ENCODE measurements at regions of chrX and their contacts with region 1.

Region 1: DNA sequence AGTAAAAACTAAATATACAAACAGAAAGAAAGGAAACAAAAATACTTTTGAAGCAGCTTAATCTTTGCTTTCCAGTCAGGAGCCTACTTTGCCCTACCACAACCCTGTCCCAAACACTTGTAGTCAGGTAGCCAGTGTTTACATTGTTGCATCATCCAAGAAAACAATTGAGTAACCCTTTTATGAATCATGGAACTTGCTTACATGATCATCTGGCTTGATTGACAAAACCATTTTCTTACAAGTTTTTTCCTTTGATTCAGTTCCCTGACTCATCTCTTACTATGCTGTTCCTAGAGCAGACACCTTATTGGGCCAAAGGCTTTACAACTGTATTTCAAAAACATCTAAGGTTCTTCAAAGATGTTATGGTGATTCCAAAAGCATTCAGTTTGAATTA is 740.1 kb downstream of the KLHL13 start:
- DNase-seq: peak; percentile 2
- ATAC-seq: no peak
- H3K4me3 ChIP-seq: no peak overlapping the region
- H3K27ac ChIP-seq: no peak overlapping the region
- H3K4me1 ChIP-seq: no peaks in the 10 kb centered on the region
- H3K27me3 ChIP-seq: no peaks in the 10 kb centered on the region
- CTCF ChIP-seq: no peak
- EP300 ChIP-seq: peak in 1 of 2 experiments; percentile 36; a peak in 1 of 4 replicates
- POLR2A ChIP-seq: no peak
- RAD21 ChIP-seq: no peak

Region 2: DNA sequence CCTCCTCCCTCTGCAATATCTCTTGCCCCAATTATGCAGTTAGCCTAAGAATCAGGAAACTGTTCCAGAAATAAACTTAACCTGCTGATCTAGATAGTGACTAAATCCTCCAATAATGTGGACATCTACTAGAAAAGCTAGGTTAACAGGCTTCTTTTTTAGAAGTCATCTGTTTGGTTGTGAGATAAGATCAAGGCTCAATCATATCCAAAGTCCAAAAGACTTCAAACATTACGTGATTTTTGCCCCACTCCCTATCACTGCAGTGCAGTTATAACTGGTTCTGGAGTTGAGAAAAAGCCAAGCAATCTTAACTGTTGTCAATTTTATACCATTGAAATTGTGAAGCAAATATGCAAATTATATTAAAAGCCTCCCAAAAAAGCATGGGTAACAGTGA is 41.3 kb before region 1 on chrX:
- CTCF ChIA-PET with region 1: no interaction called
- POLR2A ChIA-PET with region 1: no interaction called
- in situ Hi-C with region 1: no loop called
- intact Hi-C with region 1: loop called (anchors 2 kb)
- DNase-seq: peak; percentile 21
- ATAC-seq: peak; percentile 75
- H3K4me3 ChIP-seq: no peak overlapping the region
- H3K27ac ChIP-seq: no peak overlapping the region
- H3K4me1 ChIP-seq: peaks cover 13% of the 10 kb centered on the region
- H3K27me3 ChIP-seq: no peaks in the 10 kb centered on the region
- CTCF ChIP-seq: no peak
- EP300 ChIP-seq: no peak
- POLR2A ChIP-seq: no peak
- RAD21 ChIP-seq: no peak

Measured in HepG2 (cell line).